ENCODE measurements at regions of chr6 and their contacts with region 1.

Region 1: GRCh38 chr6:89080542-89081422 is at the start of gene PNRC1:
- DNase-seq: peak; percentile 100
- H3K4me3 ChIP-seq: peak within 1 kb of the TSS; percentile 90 to 99
- H3K27ac ChIP-seq: peak within 1 kb of the TSS; percentile 99 to 100
- H3K4me1 ChIP-seq: peaks cover 0 to 36% (median 22%) of the 10 kb centered on the region in 4 donors
- H3K27me3 ChIP-seq: no peaks in the 10 kb centered on the region
- CTCF ChIP-seq: no peak

Region 2: GRCh38 chr6:88982720-88983119 is 98.1 kb before region 1 on chr6:
- intact Hi-C with region 1: loop called (anchors 5 kb)
- DNase-seq: peak; percentile 81 to 83
- H3K4me3 ChIP-seq: no peak overlapping the region
- H3K27ac ChIP-seq: no peak overlapping the region
- H3K4me1 ChIP-seq: peaks cover 0 to 7% (median 4%) of the 10 kb centered on the region in 4 donors
- H3K27me3 ChIP-seq: no peaks in the 10 kb centered on the region
- CTCF ChIP-seq: peak; percentile 59 to 88

Region 3: GRCh38 chr6:89022798-89023197 is 58.0 kb before region 1 on chr6:
- intact Hi-C with region 1: loop called (anchors 5 kb)
- DNase-seq: no peak
- H3K4me3 ChIP-seq: no peak overlapping the region
- H3K27ac ChIP-seq: peak overlapping the region; percentile 46 to 66
- H3K4me1 ChIP-seq: peaks cover 5 to 48% (median 32%) of the 10 kb centered on the region in 4 donors
- H3K27me3 ChIP-seq: no peaks in the 10 kb centered on the region
- CTCF ChIP-seq: no peak

Region 4: GRCh38 chr6:89035252-89036106 is 45.3 kb before region 1 on chr6:
- intact Hi-C with region 1: loop called (anchors 2 kb)
- DNase-seq: peak; percentile 89 to 92
- H3K4me3 ChIP-seq: peak overlapping the region; percentile 10 to 15
- H3K27ac ChIP-seq: peak overlapping the region; percentile 63 to 70
- H3K4me1 ChIP-seq: peaks cover 0 to 34% (median 26%) of the 10 kb centered on the region in 4 donors
- H3K27me3 ChIP-seq: no peaks in the 10 kb centered on the region
- CTCF ChIP-seq: no peak

Region 5: GRCh38 chr6:90338422-90338821 is 1257.6 kb after region 1 on chr6:
- intact Hi-C with region 1: no loop called
- DNase-seq: no peak
- H3K4me3 ChIP-seq: no peak overlapping the region
- H3K27ac ChIP-seq: no peak overlapping the region
- H3K4me1 ChIP-seq: no peaks in the 10 kb centered on the region
- H3K27me3 ChIP-seq: no peaks in the 10 kb centered on the region
- CTCF ChIP-seq: no peak

Measured in tibial artery (tissue), 4 donors.